Gastrocnemius medialis (tissue), 4 donors: ENCODE measurements at regions of chr20 and their contacts with region 1.

Region 1: DNA sequence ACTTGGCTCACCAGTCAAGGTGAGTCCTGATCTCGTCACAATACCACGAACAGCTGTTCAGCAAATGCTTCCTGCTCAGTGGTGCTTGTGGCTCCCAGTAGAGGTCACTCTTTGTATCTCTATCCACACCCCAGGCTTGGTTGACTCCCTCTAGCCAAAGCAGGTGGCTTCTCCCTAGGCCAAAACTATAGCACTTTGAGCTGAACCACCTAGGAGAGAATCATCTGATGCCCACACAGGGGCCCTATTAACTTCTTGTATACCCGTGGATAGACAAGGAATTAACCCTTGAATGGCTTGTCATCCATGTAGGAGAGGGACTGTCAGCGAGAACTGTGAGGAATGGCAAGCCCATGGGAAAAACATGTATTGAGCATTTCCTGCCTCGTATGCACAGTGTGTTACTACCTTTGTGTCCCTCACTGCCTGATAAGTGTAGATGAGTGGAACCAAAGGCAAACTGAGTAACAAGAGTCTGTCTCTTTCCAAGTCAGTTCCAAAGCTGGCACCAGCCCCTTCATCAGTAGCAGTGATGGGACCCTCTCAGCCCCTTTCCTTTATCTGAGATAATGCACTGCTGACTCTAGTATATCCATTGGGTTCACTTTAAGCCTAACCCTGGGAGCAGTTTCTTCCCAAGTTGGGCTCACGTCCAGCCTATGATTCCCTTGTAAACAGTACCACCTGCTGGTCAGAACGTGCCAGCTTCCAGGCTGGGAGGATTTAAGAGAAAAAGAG is 42.5 kb downstream of the EIF2S2 start:
- DNase-seq: peak; percentile 66 to 72
- ATAC-seq: peak; percentile 94
- H3K4me3 ChIP-seq: no peak overlapping the region
- H3K27ac ChIP-seq: peak overlapping the region; percentile 55 to 72 (median 64)
- H3K4me1 ChIP-seq: peaks cover 16 to 41% of the 10 kb centered on the region in 2 donors
- H3K27me3 ChIP-seq: no peaks in the 10 kb centered on the region
- CTCF ChIP-seq: peak; percentile 83 to 89 (median 87)
- POLR2A ChIP-seq: no peak

Region 2: GRCh38 chr20:33791959-33792597 is 277.4 kb before region 1 on chr20:
- in situ Hi-C with region 1: no loop called
- intact Hi-C with region 1: loop called (anchors 5 kb)
- DNase-seq: peak in 1 of 2 donors; percentile 28
- ATAC-seq: no peak
- H3K4me3 ChIP-seq: no peak overlapping the region
- H3K27ac ChIP-seq: peak overlapping the region in 2 of 4 donors; percentile 37 to 59
- H3K4me1 ChIP-seq: peaks cover 13 to 29% of the 10 kb centered on the region in 2 donors
- H3K27me3 ChIP-seq: no peaks in the 10 kb centered on the region
- CTCF ChIP-seq: peak; percentile 42 to 84 (median 72)
- POLR2A ChIP-seq: no peak

Region 3: GRCh38 chr20:33862709-33863403 is 206.7 kb before region 1 on chr20:
- in situ Hi-C with region 1: no loop called
- intact Hi-C with region 1: loop called (anchors 2 kb)
- DNase-seq: peak in 1 of 2 donors; percentile 15
- ATAC-seq: peak in 1 of 2 donors; percentile 36
- H3K4me3 ChIP-seq: no peak overlapping the region
- H3K27ac ChIP-seq: no peak overlapping the region
- H3K4me1 ChIP-seq: peaks cover 6 to 10% of the 10 kb centered on the region in 2 donors
- H3K27me3 ChIP-seq: no peaks in the 10 kb centered on the region
- CTCF ChIP-seq: peak; percentile 40 to 75 (median 55)
- POLR2A ChIP-seq: no peak

Region 4: DNA sequence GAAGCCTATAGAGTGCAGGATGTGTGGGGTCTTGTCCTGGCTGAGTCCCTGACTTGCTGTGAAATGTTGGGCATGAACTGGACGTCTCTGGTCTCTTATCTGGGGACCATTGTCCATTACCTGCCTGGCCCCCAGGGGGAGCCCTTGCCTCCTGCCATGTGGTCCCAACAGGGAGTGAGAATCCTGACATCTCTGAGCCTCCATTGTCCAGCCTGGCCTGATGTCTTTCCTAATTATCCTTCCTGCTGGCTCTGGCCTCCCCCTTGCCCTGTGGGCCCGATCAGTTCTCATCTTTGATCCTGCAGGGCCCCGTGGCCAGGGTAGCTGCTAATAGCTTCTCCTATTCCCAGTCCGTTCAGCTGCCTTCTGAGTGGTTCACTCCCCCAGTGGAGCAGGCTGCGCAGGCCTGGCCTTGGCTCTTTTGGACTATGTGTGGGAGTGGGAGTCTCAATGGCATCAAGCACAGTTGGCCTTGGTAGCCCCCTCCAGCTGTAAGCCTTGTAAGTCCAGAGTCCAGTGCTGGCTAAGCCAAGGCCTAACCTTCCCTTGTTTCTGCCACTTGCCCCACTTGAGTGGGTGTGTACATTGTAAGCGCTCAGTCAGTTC is 153.7 kb before region 1 on chr20:
- in situ Hi-C with region 1: no loop called
- intact Hi-C with region 1: loop called (anchors 1 kb)
- DNase-seq: peak; percentile 4 to 40
- ATAC-seq: peak; percentile 56 to 68
- H3K4me3 ChIP-seq: no peak overlapping the region
- H3K27ac ChIP-seq: no peak overlapping the region
- H3K4me1 ChIP-seq: no peaks in the 10 kb centered on the region
- H3K27me3 ChIP-seq: no peaks in the 10 kb centered on the region
- CTCF ChIP-seq: peak; percentile 38 to 76 (median 65)
- POLR2A ChIP-seq: no peak

Region 5: GRCh38 chr20:33933469-33933909 is 136.0 kb before region 1 on chr20:
- in situ Hi-C with region 1: loop called in 3 of 4 experiments (anchors 10 to 25 kb)
- intact Hi-C with region 1: loop called (anchors 1 kb)
- DNase-seq: peak; percentile 60 to 75
- ATAC-seq: peak; percentile 93 to 98
- H3K4me3 ChIP-seq: no peak overlapping the region
- H3K27ac ChIP-seq: peak overlapping the region; percentile 31 to 72 (median 46)
- H3K4me1 ChIP-seq: no peaks in the 10 kb centered on the region
- H3K27me3 ChIP-seq: no peaks in the 10 kb centered on the region
- CTCF ChIP-seq: peak in 4 of 5 experiments; percentile 47 to 58 (median 52)
- POLR2A ChIP-seq: no peak

Region 6: GRCh38 chr20:33947709-33948295 is 121.7 kb before region 1 on chr20:
- in situ Hi-C with region 1: loop called in 2 of 4 experiments (anchors 10 to 25 kb)
- intact Hi-C with region 1: no loop called
- DNase-seq: no peak
- ATAC-seq: no peak
- H3K4me3 ChIP-seq: no peak overlapping the region
- H3K27ac ChIP-seq: no peak overlapping the region
- H3K4me1 ChIP-seq: no peaks in the 10 kb centered on the region
- H3K27me3 ChIP-seq: no peaks in the 10 kb centered on the region
- CTCF ChIP-seq: peak in 4 of 5 experiments; percentile 27 to 45 (median 39)
- POLR2A ChIP-seq: no peak

Region 7: GRCh38 chr20:33971147-33971975 is 98.1 kb before region 1 on chr20:
- in situ Hi-C with region 1: no loop called
- intact Hi-C with region 1: no loop called
- DNase-seq: no peak
- ATAC-seq: no peak
- H3K4me3 ChIP-seq: no peak overlapping the region
- H3K27ac ChIP-seq: no peak overlapping the region
- H3K4me1 ChIP-seq: no peaks in the 10 kb centered on the region
- H3K27me3 ChIP-seq: no peaks in the 10 kb centered on the region
- CTCF ChIP-seq: no peak
- POLR2A ChIP-seq: no peak

Region 8: DNA sequence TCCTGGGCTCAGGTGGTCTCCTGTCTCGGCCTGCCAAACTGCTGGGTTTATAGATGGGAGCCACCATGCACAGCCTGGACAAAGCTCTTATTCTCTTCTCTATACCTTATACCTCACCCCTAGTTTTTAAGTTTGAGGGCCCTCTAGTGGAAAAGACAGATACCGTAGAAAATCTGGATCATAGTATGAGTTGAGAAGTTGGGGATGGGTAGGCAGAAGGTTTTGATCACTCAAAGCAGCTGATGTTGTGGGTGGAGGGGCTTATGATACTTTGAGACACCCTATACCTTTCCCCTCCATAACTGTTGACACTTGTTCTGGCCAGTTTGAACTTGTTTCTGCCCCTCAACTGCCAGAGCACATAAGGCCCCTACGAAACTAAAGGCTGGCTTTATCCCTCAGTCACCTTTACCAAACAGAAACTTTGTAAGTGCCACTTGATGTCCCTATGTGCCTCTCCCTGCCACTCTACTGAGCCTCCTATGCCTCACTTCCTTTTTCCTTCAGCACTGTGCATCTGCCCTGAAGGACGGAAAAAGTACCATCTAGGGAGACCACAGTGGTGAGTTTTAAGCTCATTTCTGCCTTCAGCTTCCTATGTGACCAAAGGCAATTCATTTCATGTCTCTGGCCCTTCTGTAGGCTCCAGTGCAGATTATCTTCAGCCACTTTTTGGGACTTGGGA is 47.2 kb before region 1 on chr20:
- in situ Hi-C with region 1: no loop called
- intact Hi-C with region 1: no loop called
- DNase-seq: no peak
- ATAC-seq: peak in 1 of 2 donors; percentile 16
- H3K4me3 ChIP-seq: no peak overlapping the region
- H3K27ac ChIP-seq: peak overlapping the region in 3 of 4 donors; percentile 69 to 77 (median 70)
- H3K4me1 ChIP-seq: peaks cover 69 to 73% of the 10 kb centered on the region in 2 donors
- H3K27me3 ChIP-seq: no peaks in the 10 kb centered on the region
- CTCF ChIP-seq: no peak
- POLR2A ChIP-seq: no peak

Region 9: DNA sequence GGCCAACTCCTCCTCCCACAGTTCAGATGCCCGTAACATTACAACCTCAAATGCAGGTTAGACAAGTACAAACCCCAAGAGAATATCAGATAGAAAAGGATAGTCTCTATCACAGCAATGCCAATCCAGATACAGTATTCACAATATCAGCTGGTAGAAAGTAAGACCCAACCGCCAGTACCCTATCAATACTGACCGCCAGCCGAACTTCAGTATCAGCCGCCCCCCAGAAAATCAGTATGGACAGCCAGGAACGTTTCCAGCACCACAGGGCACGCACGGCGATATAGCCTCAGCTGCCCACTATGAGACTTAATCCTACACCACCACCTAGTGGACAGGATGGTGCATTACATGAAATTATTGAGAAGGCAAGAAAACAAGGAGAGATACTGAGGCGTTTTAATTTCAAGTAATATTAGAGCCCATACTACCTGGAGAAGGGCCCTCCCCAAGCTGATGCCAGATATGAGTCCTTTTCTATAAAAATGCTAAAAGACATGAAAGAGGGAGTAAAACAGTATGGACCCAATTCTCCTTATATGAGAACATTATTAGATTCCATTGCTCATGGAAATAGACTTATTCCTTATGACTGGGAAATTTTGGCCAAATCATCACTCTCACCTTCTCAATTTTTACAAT is 60.1 kb after region 1 on chr20:
- in situ Hi-C with region 1: no loop called
- intact Hi-C with region 1: loop called (anchors 2 kb)
- DNase-seq: peak; percentile 31 to 38
- ATAC-seq: peak; percentile 86 to 87
- H3K4me3 ChIP-seq: peak overlapping the region; percentile 8 to 41 (median 16)
- H3K27ac ChIP-seq: no peak overlapping the region
- H3K4me1 ChIP-seq: peaks cover 0 to 3% of the 10 kb centered on the region in 2 donors
- H3K27me3 ChIP-seq: no peaks in the 10 kb centered on the region
- CTCF ChIP-seq: peak; percentile 81 to 87 (median 85)
- POLR2A ChIP-seq: no peak